ENCODE measurements at regions of chr5 and their contacts with region 1.

Region 1: GRCh38 chr5:148443998-148444397 is 60.2 kb downstream of the FBXO38 start:
- DNase-seq: peak; percentile 6
- H3K4me3 Mint-ChIP-seq: no peak overlapping the region
- H3K27ac Mint-ChIP-seq: no peak overlapping the region
- H3K4me1 Mint-ChIP-seq: no peaks in the 10 kb centered on the region
- H3K27me3 Mint-ChIP-seq: peaks cover 3% of the 10 kb centered on the region

Region 2: GRCh38 chr5:148179234-148179824 is 264.7 kb before region 1 on chr5:
- intact Hi-C with region 1: loop called (anchors 1 kb)
- DNase-seq: no peak
- H3K4me3 Mint-ChIP-seq: no peak overlapping the region
- H3K27ac Mint-ChIP-seq: no peak overlapping the region
- H3K4me1 Mint-ChIP-seq: no peaks in the 10 kb centered on the region
- H3K27me3 Mint-ChIP-seq: peaks cover 7% of the 10 kb centered on the region

Region 3: DNA sequence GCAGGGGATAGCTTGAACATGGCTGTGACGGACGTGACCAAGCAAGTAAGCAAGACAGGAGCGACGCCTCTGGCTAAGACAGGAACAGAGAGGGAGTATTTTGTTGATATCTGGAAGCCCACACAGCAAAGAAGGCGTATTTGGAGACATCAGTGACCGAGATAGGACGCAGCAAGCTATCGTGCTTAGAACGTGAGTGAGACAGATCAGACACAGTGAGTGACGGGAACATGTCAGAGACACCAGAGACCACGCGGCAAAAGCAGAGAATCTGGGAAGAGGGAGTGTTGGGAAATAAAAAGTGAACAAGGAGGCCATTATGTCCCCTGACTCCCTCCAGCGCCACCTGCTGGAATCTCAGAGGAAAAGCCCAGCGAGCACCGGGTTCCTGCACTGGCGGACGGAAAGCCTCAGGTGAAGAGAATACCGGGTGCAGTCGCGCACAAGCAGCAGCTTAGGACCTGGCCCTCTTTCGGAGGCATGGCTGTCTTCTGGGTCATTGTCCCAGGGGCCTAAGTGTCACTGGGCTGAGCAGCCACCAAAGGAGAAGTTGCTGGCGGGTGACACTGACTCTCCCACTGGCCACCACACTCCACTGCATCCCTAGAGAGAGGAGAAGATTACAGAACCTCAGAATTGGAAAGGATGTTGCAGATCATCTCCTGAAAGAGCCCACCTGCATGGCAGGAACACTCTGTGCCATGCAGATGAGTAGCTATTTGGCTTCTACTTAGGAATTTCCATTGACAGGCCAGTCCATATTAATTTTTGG is 38.9 kb after region 1 on chr5:
- intact Hi-C with region 1: loop called (anchors 1 kb)
- DNase-seq: peak; percentile 49
- H3K4me3 Mint-ChIP-seq: no peak overlapping the region
- H3K27ac Mint-ChIP-seq: no peak overlapping the region
- H3K4me1 Mint-ChIP-seq: no peaks in the 10 kb centered on the region
- H3K27me3 Mint-ChIP-seq: peaks cover 15% of the 10 kb centered on the region

Region 4: GRCh38 chr5:148687427-148687826 is 243.4 kb after region 1 on chr5:
- intact Hi-C with region 1: loop called (anchors 1 kb)
- DNase-seq: no peak
- H3K4me3 Mint-ChIP-seq: no peak overlapping the region
- H3K27ac Mint-ChIP-seq: no peak overlapping the region
- H3K4me1 Mint-ChIP-seq: no peaks in the 10 kb centered on the region
- H3K27me3 Mint-ChIP-seq: peaks cover 9% of the 10 kb centered on the region

Region 5: DNA sequence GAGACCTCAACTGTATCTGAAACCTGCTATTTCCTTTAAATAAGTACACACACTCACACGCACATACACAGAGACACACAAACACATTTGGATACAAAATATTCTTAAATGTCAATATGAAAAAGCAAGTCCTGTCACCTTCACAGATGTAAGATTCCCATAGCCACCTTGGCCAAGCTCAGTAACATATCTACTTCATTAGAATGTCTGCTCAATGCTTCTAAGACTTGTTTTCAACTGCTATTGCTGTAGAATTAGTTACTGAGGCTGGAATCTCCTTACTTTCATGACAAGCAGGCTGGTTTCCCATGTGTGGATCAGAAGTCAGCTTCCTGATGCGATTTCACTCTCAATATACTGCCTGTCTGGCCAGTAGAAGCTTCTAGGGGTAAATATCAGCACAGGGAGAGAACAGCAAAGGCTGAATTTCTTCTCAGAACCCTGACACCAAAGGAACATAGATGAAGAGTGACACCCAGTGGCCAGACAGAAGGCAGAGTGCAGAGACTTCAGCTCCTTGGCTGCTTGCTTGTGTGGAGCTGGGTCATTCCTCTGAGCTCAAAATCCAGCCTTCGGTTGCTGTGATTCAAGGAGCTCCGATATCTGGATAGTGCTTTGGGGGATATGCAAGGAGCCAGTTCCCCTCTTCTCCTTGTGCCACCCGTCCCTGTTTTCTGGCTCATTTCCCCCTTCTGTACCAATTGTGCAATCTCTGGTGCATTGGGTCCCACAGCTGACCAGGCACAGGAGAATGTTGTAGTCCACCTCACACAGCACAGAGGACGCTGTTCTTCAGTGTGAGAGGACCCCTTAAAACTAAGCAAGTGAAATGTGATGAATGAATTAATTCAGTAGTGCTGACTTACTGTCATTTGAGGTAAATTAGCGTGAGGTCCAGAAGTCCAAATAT is 670.7 kb after region 1 on chr5:
- intact Hi-C with region 1: loop called (anchors 10 kb)
- DNase-seq: peak; percentile 3
- H3K4me3 Mint-ChIP-seq: no peak overlapping the region
- H3K27ac Mint-ChIP-seq: no peak overlapping the region
- H3K4me1 Mint-ChIP-seq: no peaks in the 10 kb centered on the region
- H3K27me3 Mint-ChIP-seq: peaks cover 29% of the 10 kb centered on the region

Measured in activated T-helper 1 cell treated with anti-CD3 and anti-CD28 coated beads, Interleukin-12 subunit alpha, Interleukin-12 subunit beta, Interleukin-2, Interleukin-4 antibody, amounts not matched to agents 30 ng/mL and 10 ng/mL and 1 ng/mL, durations not matched to agents 14 hours and 24 hours and 36 hours (primary cell).